Heart right ventricle (tissue), 16 donors: ENCODE measurements at regions of chr20 and their contacts with region 1.

Region 1: GRCh38 chr20:63537525-63538203 is 488 bp upstream of the PTK6 start:
- DNase-seq: peak; percentile 80 to 87
- ATAC-seq: peak; percentile 86 to 93 (median 88)
- H3K4me3 ChIP-seq: peak overlapping the region in 9 of 10 donors; percentile 6 to 51 (median 31)
- H3K27ac ChIP-seq: peak overlapping the region in 7 of 10 donors; percentile 34 to 91 (median 57)
- H3K4me1 ChIP-seq: peaks cover 0 to 34% (median 16%) of the 10 kb centered on the region in 9 donors
- H3K27me3 ChIP-seq: peaks cover 0 to 38% (median 20%) of the 10 kb centered on the region in 7 donors
- CTCF ChIP-seq: peak; percentile 93 to 99 (median 97)

Region 2: GRCh38 chr20:63471983-63472831 is 65.5 kb before region 1 on chr20 and contains the start of gene KCNQ2:
- intact Hi-C with region 1: no loop called
- DNase-seq: no peak
- ATAC-seq: no peak
- H3K4me3 ChIP-seq: peak within 1 kb of the TSS in 5 of 10 donors; percentile 10 to 24 (median 13)
- H3K27ac ChIP-seq: no peak within 1 kb of the TSS
- H3K4me1 ChIP-seq: peaks cover 0 to 13% (median 9%) of the 10 kb centered on the region in 9 donors
- H3K27me3 ChIP-seq: peaks cover 21 to 93% (median 83%) of the 10 kb centered on the region in 7 donors
- CTCF ChIP-seq: no peak
- total RNA-seq, gene KCNQ2: 0.26 to 3.8 (median 1.9) TPM in 4 of 10 donors, not detected in the others

Region 3: DNA sequence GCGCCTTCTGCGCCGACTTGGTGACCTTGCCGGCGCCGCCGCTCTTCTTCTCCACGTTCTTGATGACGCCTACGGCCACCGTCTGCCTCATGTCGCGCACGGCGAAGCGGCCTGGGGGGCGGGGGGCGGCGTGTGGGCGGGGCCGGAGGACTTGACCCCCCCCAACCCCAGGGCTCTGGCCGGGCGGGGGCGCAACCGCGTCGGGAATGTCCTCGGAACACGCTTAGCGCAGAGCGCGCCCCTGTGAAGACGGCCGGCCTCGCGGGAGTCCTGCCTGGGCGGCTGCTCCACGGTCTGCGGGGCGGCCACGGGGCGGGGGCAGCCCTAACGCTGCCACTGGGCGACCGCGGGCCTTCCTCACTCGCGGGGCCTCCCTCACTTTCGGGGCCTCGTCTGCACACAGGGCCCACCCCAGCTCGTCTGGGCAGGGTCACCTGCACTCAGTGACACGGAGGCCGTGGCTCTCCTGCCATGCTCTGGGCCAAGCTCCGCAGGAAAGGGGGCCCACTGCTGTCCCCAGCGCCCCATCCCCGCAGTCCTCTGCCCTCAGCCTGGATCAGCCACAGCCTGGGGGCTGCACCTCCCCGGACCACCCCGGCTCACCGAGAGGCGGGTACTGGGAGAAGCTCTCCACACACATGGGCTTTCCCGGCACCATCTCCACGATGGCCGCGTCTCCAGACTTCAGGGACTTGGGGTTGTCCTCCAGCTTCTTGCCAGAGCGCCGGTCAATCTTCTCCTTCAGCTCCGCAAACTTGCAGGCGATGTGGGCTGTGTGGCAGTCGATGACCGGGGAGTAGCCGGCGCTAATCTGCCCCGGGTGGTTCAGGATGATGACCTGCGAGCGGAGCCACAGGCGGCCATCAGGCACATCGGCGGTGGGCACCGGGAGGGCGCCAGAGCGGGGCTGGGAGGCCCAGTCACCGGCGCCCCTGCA is 49.1 kb before region 1 on chr20:
- intact Hi-C with region 1: no loop called
- DNase-seq: peak in 1 of 2 donors; percentile 7
- ATAC-seq: no peak
- H3K4me3 ChIP-seq: no peak overlapping the region
- H3K27ac ChIP-seq: no peak overlapping the region
- H3K4me1 ChIP-seq: peaks cover 0 to 29% (median 5%) of the 10 kb centered on the region in 9 donors
- H3K27me3 ChIP-seq: peaks cover 0 to 56% (median 42%) of the 10 kb centered on the region in 7 donors
- CTCF ChIP-seq: no peak

Region 4: DNA sequence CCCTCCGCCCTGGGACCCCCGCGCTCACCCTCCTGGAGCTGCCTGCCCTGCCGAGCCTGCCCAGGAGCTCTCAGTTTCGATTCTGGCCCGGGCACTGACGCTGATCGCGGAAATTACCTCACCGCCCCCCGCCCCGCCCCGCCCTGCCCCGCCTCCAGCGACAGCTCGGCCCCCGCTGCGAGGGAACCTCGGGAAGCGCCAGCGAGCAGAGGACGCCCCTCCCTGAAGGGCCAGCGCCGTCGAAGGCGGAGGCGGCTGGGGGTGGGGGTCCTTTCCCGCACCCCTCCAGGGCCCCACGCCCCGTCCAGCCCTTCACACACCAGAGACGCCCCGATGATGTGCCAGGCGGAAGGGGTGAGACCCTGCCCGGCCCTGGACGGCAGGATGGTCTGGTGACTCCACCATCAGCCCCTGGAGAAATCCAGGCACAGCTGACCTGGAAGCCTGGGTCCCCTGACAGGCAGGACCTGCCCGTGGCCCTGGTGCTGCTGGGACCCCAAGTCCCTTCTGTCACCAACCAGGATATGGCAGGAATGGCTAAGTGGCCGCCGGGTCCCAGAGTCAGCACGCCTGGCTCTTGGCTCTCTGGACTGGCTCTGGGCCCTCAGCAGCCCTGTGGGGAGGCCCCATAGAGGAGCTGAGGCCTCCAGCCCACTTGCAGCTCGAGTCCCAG is 36.6 kb after region 1 on chr20 and contains the start of gene HELZ2:
- intact Hi-C with region 1: loop called in 1 of 10 experiments (anchors 5 kb)
- DNase-seq: peak; percentile 79 to 82
- ATAC-seq: peak; percentile 78 to 91 (median 84)
- H3K4me3 ChIP-seq: peak within 1 kb of the TSS; percentile 67 to 98 (median 86)
- H3K27ac ChIP-seq: peak within 1 kb of the TSS; percentile 43 to 95 (median 92)
- H3K4me1 ChIP-seq: peaks cover 5 to 37% (median 24%) of the 10 kb centered on the region in 9 donors
- H3K27me3 ChIP-seq: peaks cover 0 to 34% (median 0%) of the 10 kb centered on the region in 7 donors
- CTCF ChIP-seq: no peak
- total RNA-seq, gene HELZ2: 10.8 to 34.3 (median 12.7) TPM

Region 5: GRCh38 chr20:63612276-63612928 is 74.7 kb after region 1 on chr20:
- intact Hi-C with region 1: loop called in 2 of 10 experiments (anchors 2 to 5 kb)
- DNase-seq: no peak
- ATAC-seq: peak in 6 of 8 donors; percentile 25 to 58 (median 40)
- H3K4me3 ChIP-seq: no peak overlapping the region
- H3K27ac ChIP-seq: peak overlapping the region in 1 of 10 donors; percentile 65
- H3K4me1 ChIP-seq: peaks cover 0 to 29% (median 0%) of the 10 kb centered on the region in 9 donors
- H3K27me3 ChIP-seq: no peaks in the 10 kb centered on the region
- CTCF ChIP-seq: no peak

Region 6: GRCh38 chr20:63884506-63885263 is 347.0 kb after region 1 on chr20:
- intact Hi-C with region 1: loop called in 1 of 10 experiments (anchors 10 kb)
- DNase-seq: peak; percentile 53 to 69
- ATAC-seq: peak; percentile 82 to 96 (median 88)
- H3K4me3 ChIP-seq: no peak overlapping the region
- H3K27ac ChIP-seq: peak overlapping the region in 8 of 10 donors; percentile 15 to 58 (median 52)
- H3K4me1 ChIP-seq: peaks cover 0 to 18% (median 7%) of the 10 kb centered on the region in 9 donors
- H3K27me3 ChIP-seq: no peaks in the 10 kb centered on the region
- CTCF ChIP-seq: no peak